ENCODE measurements at regions of chr7 and their contacts with region 1.

Region 1: GRCh38 chr7:22782616-22783232 is 39.9 kb downstream of the TOMM7 start:
- DNase-seq: peak; percentile 84
- ATAC-seq: peak; percentile 96
- H3K4me3 Mint-ChIP-seq: no peak overlapping the region
- H3K27ac Mint-ChIP-seq: no peak overlapping the region
- H3K4me1 Mint-ChIP-seq: peaks cover 17% of the 10 kb centered on the region
- H3K27me3 Mint-ChIP-seq: no peaks in the 10 kb centered on the region
- CTCF ChIP-seq: peak; percentile 73

Region 2: DNA sequence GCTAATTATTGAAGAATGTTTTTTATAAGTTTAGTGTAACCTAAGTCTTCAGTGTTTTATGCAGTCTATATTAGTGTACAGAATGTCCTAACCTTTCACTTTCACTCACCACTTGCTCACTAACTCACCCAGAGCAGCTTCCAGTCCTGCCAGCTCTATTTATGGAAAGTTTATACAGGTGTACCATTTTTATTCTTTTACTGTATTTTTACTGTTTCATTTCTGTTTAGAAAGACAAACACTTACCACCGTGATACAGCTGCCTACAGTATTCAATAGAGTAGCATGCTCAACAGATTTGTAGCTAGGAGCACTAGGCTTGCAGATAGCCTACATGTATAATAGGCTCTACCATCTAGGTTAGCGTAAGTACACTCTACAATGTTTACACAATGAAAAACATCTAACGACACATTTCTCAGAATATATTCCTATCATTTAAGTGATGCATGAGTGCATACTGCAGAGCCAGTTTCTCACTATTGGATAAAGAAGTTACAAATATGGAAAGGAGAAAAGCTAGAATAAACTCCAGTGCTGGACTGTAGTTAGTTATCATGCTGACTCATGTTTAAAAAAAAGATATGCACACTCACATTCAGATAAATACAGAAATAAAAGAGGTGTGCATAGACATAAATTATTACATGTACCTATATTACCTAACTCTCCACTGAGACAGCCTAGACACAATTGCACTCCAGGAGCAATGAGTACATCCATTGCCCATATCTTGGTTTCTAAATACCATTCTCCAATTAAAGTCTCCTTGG is 313.2 kb before region 1 on chr7:
- CTCF ChIA-PET with region 1: no interaction called
- POLR2A ChIA-PET with region 1: no interaction called
- DNase-seq: no peak
- ATAC-seq: no peak
- H3K4me3 Mint-ChIP-seq: no peak overlapping the region
- H3K27ac Mint-ChIP-seq: no peak overlapping the region
- H3K4me1 Mint-ChIP-seq: no peaks in the 10 kb centered on the region; the same call in 1 of the 2 replicates
- H3K27me3 Mint-ChIP-seq: no peaks in the 10 kb centered on the region
- CTCF ChIP-seq: no peak

Region 3: GRCh38 chr7:22726345-22727185 is 56.2 kb before region 1 on chr7:
- CTCF ChIA-PET with region 1: interaction called, 21 read pairs
- POLR2A ChIA-PET with region 1: no interaction called
- DNase-seq: peak; percentile 58
- ATAC-seq: peak; percentile 85
- H3K4me3 Mint-ChIP-seq: peak overlapping the region; percentile 22; the same call in 1 of the 2 replicates
- H3K27ac Mint-ChIP-seq: peak overlapping the region; percentile 31; the same call in 1 of the 2 replicates
- H3K4me1 Mint-ChIP-seq: peaks cover 42% of the 10 kb centered on the region
- H3K27me3 Mint-ChIP-seq: peaks cover 4% of the 10 kb centered on the region
- CTCF ChIP-seq: peak; percentile 39; the same call in 1 of the 2 replicates

Region 4: DNA sequence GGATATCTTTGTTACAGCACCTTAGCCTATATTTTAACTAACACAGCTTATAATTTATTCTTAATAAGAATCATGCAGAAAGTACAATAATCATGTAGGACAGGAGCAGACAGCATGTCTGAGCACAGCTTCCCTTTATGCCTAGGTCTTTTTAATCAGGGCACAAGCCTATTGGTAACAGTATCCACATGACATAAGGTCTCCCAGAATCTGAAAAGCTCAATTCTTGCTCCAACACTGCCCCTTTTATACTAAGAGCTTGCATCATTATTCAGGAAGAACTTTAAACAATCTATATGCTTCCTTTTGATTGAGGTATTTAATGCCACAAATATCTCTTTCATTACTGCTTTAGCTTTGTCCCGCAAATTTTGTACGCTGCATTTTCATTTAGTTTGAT is 24.1 kb before region 1 on chr7:
- CTCF ChIA-PET with region 1: interaction called, 17 read pairs
- POLR2A ChIA-PET with region 1: no interaction called
- DNase-seq: no peak
- ATAC-seq: no peak
- H3K4me3 Mint-ChIP-seq: no peak overlapping the region
- H3K27ac Mint-ChIP-seq: no peak overlapping the region
- H3K4me1 Mint-ChIP-seq: 0 out of 2 replicates have a peak, but pooled peaks cover 4% of the 10 kb centered on the region
- H3K27me3 Mint-ChIP-seq: no peaks in the 10 kb centered on the region; the same call in 1 of the 2 replicates
- CTCF ChIP-seq: no peak

Region 5: GRCh38 chr7:22771194-22771871 is 11.4 kb before region 1 on chr7:
- CTCF ChIA-PET with region 1: interaction called, 13 read pairs
- POLR2A ChIA-PET with region 1: no interaction called
- DNase-seq: no peak
- ATAC-seq: no peak
- H3K4me3 Mint-ChIP-seq: no peak overlapping the region
- H3K27ac Mint-ChIP-seq: no peak overlapping the region
- H3K4me1 Mint-ChIP-seq: no peaks in the 10 kb centered on the region
- H3K27me3 Mint-ChIP-seq: no peaks in the 10 kb centered on the region
- CTCF ChIP-seq: no peak

Region 6: GRCh38 chr7:22811746-22812280 is 29.1 kb after region 1 on chr7:
- CTCF ChIA-PET with region 1: interaction called, 18 read pairs
- POLR2A ChIA-PET with region 1: no interaction called
- DNase-seq: no peak
- ATAC-seq: no peak
- H3K4me3 Mint-ChIP-seq: no peak overlapping the region
- H3K27ac Mint-ChIP-seq: peak overlapping the region; percentile 98
- H3K4me1 Mint-ChIP-seq: peaks cover 78% of the 10 kb centered on the region
- H3K27me3 Mint-ChIP-seq: no peaks in the 10 kb centered on the region
- CTCF ChIP-seq: no peak

Region 7: DNA sequence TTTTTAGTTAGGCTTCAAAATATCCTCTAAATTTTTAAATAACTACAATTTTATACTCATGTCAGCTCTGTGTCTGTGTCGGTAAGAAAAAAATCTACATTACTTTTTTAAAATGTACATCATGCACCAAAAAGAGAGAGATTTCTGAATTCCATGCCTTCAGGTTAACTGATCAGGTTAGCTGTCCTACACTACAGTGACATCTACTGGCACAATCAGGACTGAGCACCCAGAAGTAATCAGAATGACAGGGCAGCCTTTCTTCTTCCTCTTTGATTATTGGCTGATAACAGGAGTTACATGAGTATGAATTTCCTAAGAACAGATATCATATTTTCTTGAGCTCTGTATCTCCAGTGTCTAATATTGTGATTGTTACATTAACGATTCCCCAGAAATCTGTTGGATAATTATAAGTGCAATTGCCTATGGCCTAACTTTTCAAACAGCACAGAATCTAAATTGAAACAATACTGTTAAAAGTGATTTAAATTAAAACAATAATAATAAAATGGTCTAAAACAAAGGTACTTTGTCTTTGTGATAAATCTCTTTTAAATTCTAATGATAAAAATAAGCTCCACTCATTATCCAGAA is 273.0 kb after region 1 on chr7:
- CTCF ChIA-PET with region 1: interaction called, 19 read pairs
- POLR2A ChIA-PET with region 1: no interaction called
- DNase-seq: peak; percentile 50
- ATAC-seq: peak; percentile 82
- H3K4me3 Mint-ChIP-seq: no peak overlapping the region
- H3K27ac Mint-ChIP-seq: no peak overlapping the region
- H3K4me1 Mint-ChIP-seq: peaks cover 24% of the 10 kb centered on the region
- H3K27me3 Mint-ChIP-seq: no peaks in the 10 kb centered on the region
- CTCF ChIP-seq: peak; percentile 64